ENCODE measurements at regions of chr5 and their contacts with region 1.

Region 1: GRCh38 chr5:157471709-157472108 is 11.7 kb downstream of the NIPAL4 start:
- DNase-seq: no peak
- ATAC-seq: peak; percentile 61
- H3K4me3 Mint-ChIP-seq: no peak overlapping the region
- H3K27ac Mint-ChIP-seq: peak overlapping the region; percentile 2
- H3K4me1 Mint-ChIP-seq: peaks cover 46% of the 10 kb centered on the region
- H3K27me3 Mint-ChIP-seq: no peaks in the 10 kb centered on the region
- CTCF ChIP-seq: no peak

Region 2: DNA sequence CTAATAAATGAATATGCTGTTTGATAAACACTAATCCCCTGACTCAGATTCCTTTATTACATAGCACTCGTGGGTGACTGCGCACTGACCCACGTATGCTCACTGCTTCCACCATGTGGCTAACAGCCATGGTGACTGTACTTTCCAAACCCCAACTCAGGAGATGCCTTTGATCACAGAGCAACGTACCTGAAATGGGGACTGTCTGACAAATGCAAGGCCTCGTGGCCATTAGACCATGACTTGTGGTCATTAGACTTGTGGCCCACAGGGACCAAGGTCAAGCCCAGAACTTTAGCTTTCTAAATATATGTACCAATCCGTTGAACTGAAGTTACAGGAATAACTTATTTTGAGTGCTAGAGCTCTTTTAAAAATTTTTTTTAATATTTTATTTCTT is 159.2 kb before region 1 on chr5:
- CTCF ChIA-PET with region 1: no interaction called
- POLR2A ChIA-PET with region 1: no interaction called
- intact Hi-C with region 1: no loop called
- DNase-seq: no peak
- ATAC-seq: peak; percentile 77
- H3K4me3 Mint-ChIP-seq: no peak overlapping the region
- H3K27ac Mint-ChIP-seq: peak overlapping the region; percentile 77
- H3K4me1 Mint-ChIP-seq: peaks cover 35% of the 10 kb centered on the region
- H3K27me3 Mint-ChIP-seq: no peaks in the 10 kb centered on the region
- CTCF ChIP-seq: peak; percentile 42

Region 3: GRCh38 chr5:157371655-157372471 is 99.8 kb before region 1 on chr5:
- CTCF ChIA-PET with region 1: no interaction called
- POLR2A ChIA-PET with region 1: no interaction called
- intact Hi-C with region 1: no loop called
- DNase-seq: no peak
- ATAC-seq: no peak
- H3K4me3 Mint-ChIP-seq: no peak overlapping the region
- H3K27ac Mint-ChIP-seq: no peak overlapping the region
- H3K4me1 Mint-ChIP-seq: no peaks in the 10 kb centered on the region
- H3K27me3 Mint-ChIP-seq: no peaks in the 10 kb centered on the region
- CTCF ChIP-seq: no peak

Region 4: DNA sequence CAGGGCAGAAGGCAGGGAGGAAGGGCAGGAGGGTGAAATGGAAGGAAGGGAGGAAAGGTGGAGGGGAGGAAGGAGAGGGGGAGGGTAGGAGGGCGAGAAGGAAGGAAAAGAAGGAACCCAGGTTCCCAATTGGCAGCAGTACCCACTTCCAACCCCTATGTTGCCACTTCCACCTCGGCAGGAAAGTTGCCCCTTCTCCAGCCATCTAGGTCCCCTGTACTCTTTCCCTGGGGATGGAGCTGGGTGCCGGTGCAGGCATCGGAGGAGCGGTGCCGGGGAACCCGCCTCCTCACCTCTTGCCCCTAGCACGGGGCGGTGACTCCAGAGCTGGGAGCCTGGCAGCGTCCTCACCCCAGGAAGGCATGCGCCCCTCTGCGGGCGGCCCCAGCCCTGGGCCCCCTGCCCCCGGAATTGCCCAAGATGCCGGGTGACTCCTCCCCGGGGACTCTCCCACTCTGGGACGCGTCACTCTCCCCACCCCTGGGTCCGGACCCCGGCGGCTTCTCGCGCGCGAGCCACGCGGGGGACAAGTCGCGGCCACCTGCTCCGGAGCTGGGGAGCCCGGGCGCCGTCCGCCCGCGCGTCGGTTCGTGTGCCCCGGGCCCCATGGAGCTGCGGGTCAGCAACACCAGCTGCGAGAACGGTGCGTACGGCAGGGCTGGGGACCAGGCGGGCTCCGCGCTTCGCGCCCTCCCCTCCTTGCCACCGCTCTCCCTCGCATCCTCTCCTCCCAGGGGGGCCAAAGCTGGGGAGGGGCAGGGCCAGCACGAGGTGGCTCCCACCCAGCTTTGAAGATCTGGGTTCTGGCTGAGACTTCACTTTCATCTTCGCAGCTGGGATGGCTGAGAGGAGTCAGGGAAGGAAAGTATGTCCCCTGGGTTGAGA is 11.8 kb before region 1 on chr5 and contains the start of gene NIPAL4:
- CTCF ChIA-PET with region 1: interaction called, 14 read pairs
- POLR2A ChIA-PET with region 1: no interaction called
- intact Hi-C with region 1: loop called (anchors 2 kb)
- DNase-seq: peak; percentile 48
- ATAC-seq: peak; percentile 54
- H3K4me3 Mint-ChIP-seq: peak within 1 kb of the TSS; percentile 84
- H3K27ac Mint-ChIP-seq: peak within 1 kb of the TSS; percentile 72
- H3K4me1 Mint-ChIP-seq: peaks cover 75% of the 10 kb centered on the region
- H3K27me3 Mint-ChIP-seq: no peaks in the 10 kb centered on the region
- CTCF ChIP-seq: no peak
- total RNA-seq, gene NIPAL4: 2.7 and 2.8 TPM in 2 replicates

Region 5: GRCh38 chr5:157486221-157486681 is 14.5 kb after region 1 on chr5:
- CTCF ChIA-PET with region 1: interaction called, 12 read pairs
- POLR2A ChIA-PET with region 1: interaction called, 6 read pairs
- intact Hi-C with region 1: no loop called
- DNase-seq: no peak
- ATAC-seq: peak; percentile 33
- H3K4me3 Mint-ChIP-seq: peak overlapping the region; percentile 56
- H3K27ac Mint-ChIP-seq: peak overlapping the region; percentile 95
- H3K4me1 Mint-ChIP-seq: peaks cover 86% of the 10 kb centered on the region
- H3K27me3 Mint-ChIP-seq: no peaks in the 10 kb centered on the region
- CTCF ChIP-seq: no peak